T-cell (primary cell): ENCODE measurements at regions of chr15 and their contacts with region 1.

Region 1: DNA sequence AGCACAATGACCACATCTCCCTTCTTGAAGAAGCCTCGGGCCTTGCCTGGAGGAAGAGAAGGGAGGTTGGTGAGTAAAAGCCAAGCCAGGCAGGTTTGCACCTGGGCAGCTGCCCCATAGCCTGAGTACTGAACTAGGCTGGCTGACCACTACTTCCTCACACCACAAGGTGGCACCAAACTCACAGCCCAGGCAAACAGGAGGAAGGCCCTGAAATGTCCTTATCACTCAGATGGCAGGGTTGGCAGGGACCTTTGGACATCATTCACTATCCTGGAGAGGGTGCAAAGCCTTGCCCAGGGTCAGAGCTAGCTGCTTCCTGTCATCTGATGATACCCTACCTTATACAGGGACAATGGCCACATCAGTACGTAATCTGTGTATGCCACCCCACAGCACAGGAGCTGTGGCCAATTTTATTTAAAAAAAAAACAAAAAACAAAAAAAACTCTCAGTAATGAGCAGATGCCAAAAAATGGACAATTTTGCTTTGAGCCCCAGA is 2.2 kb upstream of the GRAMD2A start:
- DNase-seq: peak; percentile 41 to 86 (median 66)
- ATAC-seq: peak; percentile 61 to 79 (median 74)
- H3K4me3 ChIP-seq: no peak overlapping the region
- H3K4me3 Mint-ChIP-seq: no peak overlapping the region
- H3K27ac ChIP-seq: no peak overlapping the region
- H3K27ac Mint-ChIP-seq: no peak overlapping the region
- H3K4me1 ChIP-seq: peaks cover 0 to 11% of the 10 kb centered on the region in 2 experiments
- H3K4me1 Mint-ChIP-seq: peaks cover 6 to 11% (median 9%) of the 10 kb centered on the region in 3 donors
- H3K27me3 ChIP-seq: peaks cover 0 to 33% of the 10 kb centered on the region in 2 experiments
- H3K27me3 Mint-ChIP-seq: peaks cover 11 to 22% of the 10 kb centered on the region in 2 donors

Region 2: DNA sequence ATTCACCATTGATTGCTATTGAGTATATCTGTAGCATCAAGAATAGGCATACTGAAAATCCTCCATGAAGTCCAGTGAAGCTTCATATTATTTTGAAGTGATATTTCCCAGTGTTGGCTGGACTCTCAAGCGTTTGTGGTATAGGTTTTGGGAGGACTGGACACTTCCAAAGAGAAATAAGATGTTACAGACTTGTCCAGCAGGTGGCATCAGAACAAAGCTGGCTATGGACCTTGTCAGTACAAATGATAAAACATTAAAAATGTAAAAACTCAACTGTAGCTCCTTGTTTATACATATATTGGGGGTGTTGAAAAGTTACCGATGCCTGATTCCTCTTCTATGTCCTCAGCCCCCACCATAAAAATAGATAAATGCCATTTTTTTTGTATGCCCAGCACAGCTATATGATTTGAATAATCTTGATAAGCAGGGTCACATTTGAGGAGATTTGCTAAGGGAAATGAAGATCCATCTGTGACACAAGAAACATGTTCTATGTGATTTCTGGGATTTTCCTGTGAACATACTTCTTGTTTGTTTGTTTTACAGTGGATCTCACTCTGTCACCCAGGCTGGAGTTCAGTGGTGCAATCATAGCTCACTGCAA is 400.2 kb after region 1 on chr15:
- CTCF ChIA-PET with region 1: no interaction called
- POLR2A ChIA-PET with region 1: interaction called in 1 of 2 experiments, 19 read pairs
- DNase-seq: peak in 11 of 35 experiments; percentile 4 to 56 (median 13)
- ATAC-seq: peak in 1 of 4 experiments; percentile 37
- H3K4me3 ChIP-seq: no peak overlapping the region
- H3K4me3 Mint-ChIP-seq: no peak overlapping the region
- H3K27ac ChIP-seq: no peak overlapping the region
- H3K27ac Mint-ChIP-seq: no peak overlapping the region
- H3K4me1 ChIP-seq: no peaks in the 10 kb centered on the region
- H3K4me1 Mint-ChIP-seq: no peaks in the 10 kb centered on the region
- H3K27me3 ChIP-seq: no peaks in the 10 kb centered on the region
- H3K27me3 Mint-ChIP-seq: no peaks in the 10 kb centered on the region